ENCODE measurements at regions of chr1 and their contacts with region 1.

Region 1: DNA sequence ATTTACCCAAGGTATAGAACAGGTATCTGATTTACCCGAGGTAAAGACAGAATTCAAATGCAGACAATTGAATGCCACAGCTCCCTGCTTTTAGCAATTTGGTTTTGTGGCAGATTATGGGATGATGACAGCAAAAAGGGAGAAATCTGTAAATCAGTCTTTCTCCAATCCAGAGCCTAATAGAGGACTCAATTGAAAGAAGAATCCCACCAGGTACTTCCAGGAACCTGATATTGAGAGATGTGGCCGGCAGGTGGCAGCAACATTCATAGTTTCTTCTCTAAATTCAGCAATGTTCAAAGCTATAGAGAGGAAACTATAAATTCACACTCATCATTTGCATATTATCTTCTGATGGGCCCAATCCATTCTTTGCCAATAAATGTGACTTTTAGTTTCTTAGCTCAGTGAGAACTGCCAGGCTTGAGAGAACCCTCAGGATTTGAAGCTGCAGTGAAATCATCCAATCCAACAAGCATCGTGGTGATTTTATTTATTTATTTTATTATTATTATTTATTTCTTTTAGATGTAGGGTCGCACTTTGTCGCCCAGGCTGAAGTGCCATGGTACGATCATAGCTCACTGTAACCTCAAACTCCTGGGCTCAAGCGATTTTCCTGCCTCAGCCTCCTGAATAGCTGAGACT is 9.8 kb upstream of the PHACTR4 start:
- DNase-seq: no peak
- ATAC-seq: peak; percentile 89
- H3K4me3 ChIP-seq: no peak overlapping the region
- H3K27ac ChIP-seq: no peak overlapping the region
- H3K4me1 ChIP-seq: no peaks in the 10 kb centered on the region
- H3K27me3 ChIP-seq: no peaks in the 10 kb centered on the region
- CTCF ChIP-seq: peak; percentile 65 to 73 (median 66)
- EP300 ChIP-seq: no peak
- POLR2A ChIP-seq: no peak
- RAD21 ChIP-seq: peak; percentile 57

Region 2: DNA sequence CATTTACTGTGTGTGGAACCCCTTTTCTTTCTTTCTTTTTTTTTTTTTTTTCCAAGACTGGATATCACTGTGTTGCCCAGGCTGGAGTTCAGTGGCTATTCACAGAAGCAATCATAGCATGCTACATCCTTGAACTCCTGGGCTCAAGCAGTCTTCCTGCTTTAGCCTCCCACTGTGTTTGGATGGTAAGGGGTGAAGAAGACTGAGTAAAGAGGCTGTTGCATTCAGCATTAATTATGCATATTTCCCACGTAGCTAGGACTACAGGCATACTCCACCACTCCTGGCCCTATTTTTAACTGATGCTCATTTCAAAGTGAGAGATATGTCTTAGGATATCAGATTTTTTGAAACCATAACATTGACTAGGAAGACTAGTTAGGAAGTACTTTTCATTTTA is 49.4 kb after region 1 on chr1:
- CTCF ChIA-PET with region 1: interaction called, 13 read pairs
- POLR2A ChIA-PET with region 1: no interaction called
- RAD21 ChIA-PET with region 1: interaction called, 6 read pairs
- SMC1A ChIA-PET with region 1: interaction called, 5 read pairs
- in situ Hi-C with region 1: no loop called
- intact Hi-C with region 1: no loop called
- DNase-seq: no peak
- ATAC-seq: no peak
- H3K4me3 ChIP-seq: no peak overlapping the region
- H3K27ac ChIP-seq: no peak overlapping the region
- H3K4me1 ChIP-seq: no peaks in the 10 kb centered on the region
- H3K27me3 ChIP-seq: no peaks in the 10 kb centered on the region
- CTCF ChIP-seq: no peak
- EP300 ChIP-seq: no peak
- POLR2A ChIP-seq: no peak
- RAD21 ChIP-seq: no peak

Region 3: GRCh38 chr1:28428990-28429520 is 69.3 kb after region 1 on chr1:
- CTCF ChIA-PET with region 1: interaction called, 11 read pairs
- POLR2A ChIA-PET with region 1: no interaction called
- RAD21 ChIA-PET with region 1: no interaction called
- SMC1A ChIA-PET with region 1: interaction called, 4 read pairs
- in situ Hi-C with region 1: no loop called
- intact Hi-C with region 1: no loop called
- DNase-seq: no peak
- ATAC-seq: no peak
- H3K4me3 ChIP-seq: no peak overlapping the region
- H3K27ac ChIP-seq: no peak overlapping the region
- H3K4me1 ChIP-seq: peaks cover 8% of the 10 kb centered on the region
- H3K27me3 ChIP-seq: no peaks in the 10 kb centered on the region
- CTCF ChIP-seq: no peak
- EP300 ChIP-seq: no peak
- POLR2A ChIP-seq: no peak
- RAD21 ChIP-seq: no peak

Region 4: DNA sequence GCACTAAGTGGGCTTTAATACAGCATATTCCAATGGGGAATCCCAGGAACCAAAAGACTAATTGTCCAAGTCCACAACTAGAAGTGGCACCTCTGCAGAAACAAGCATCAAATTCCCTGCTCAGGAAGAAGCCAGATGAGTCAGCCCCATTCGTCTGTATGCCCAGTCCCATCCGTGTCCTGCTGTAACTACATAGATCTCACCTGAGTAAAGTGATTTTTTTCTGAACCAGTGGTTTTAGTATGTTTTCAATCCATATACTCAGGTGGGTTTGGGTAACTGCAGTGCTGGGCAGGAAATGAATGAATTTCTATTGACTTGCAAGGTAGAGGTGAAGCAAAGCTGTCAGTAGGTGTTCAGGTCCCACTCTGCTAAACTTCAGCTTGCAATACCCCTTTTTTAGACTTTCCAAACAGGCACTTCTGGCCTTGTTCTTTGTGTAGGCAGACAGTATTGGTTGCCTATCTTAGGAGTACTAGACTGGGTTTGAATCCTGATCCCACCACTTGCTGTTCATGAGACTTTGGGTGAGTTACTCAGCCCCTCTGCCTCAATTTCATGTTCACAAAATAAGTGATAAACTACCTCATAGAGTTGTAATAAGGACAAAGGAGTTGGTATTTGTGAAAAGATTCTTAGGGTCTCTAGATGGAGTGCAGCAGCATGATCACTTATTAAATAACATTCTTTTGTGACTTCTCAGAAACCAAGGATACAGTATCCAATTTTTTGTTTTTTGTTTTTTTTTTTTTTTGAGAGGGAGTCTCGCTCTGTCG is 151.1 kb after region 1 on chr1:
- CTCF ChIA-PET with region 1: interaction called, 18 read pairs
- POLR2A ChIA-PET with region 1: interaction called, 4 read pairs
- RAD21 ChIA-PET with region 1: interaction called, 8 read pairs
- SMC1A ChIA-PET with region 1: interaction called, 3 read pairs
- in situ Hi-C with region 1: no loop called
- intact Hi-C with region 1: no loop called
- DNase-seq: no peak
- ATAC-seq: peak; percentile 11
- H3K4me3 ChIP-seq: peak overlapping the region; percentile 84
- H3K27ac ChIP-seq: peak overlapping the region; percentile 94
- H3K4me1 ChIP-seq: peaks cover 10% of the 10 kb centered on the region
- H3K27me3 ChIP-seq: no peaks in the 10 kb centered on the region
- CTCF ChIP-seq: no peak
- EP300 ChIP-seq: no peak
- POLR2A ChIP-seq: peak; percentile 67
- RAD21 ChIP-seq: no peak

Region 5: GRCh38 chr1:28518000-28518744 is 158.5 kb after region 1 on chr1:
- CTCF ChIA-PET with region 1: interaction called, 18 read pairs
- POLR2A ChIA-PET with region 1: interaction called, 4 read pairs
- RAD21 ChIA-PET with region 1: interaction called, 4 read pairs
- SMC1A ChIA-PET with region 1: interaction called, 3 read pairs
- in situ Hi-C with region 1: no loop called
- intact Hi-C with region 1: no loop called
- DNase-seq: no peak
- ATAC-seq: peak; percentile 72
- H3K4me3 ChIP-seq: peak overlapping the region; percentile 80
- H3K27ac ChIP-seq: peak overlapping the region; percentile 84
- H3K4me1 ChIP-seq: peaks cover 18% of the 10 kb centered on the region
- H3K27me3 ChIP-seq: no peaks in the 10 kb centered on the region
- CTCF ChIP-seq: peak; percentile 94 to 99 (median 97); a peak in 5 of 6 replicates
- EP300 ChIP-seq: no peak
- POLR2A ChIP-seq: peak; percentile 89
- RAD21 ChIP-seq: peak; percentile 89

Region 6: GRCh38 chr1:28778021-28778420 is 418.3 kb after region 1 on chr1:
- CTCF ChIA-PET with region 1: no interaction called
- POLR2A ChIA-PET with region 1: no interaction called
- RAD21 ChIA-PET with region 1: no interaction called
- SMC1A ChIA-PET with region 1: no interaction called
- in situ Hi-C with region 1: no loop called
- intact Hi-C with region 1: no loop called
- DNase-seq: no peak
- ATAC-seq: no peak
- H3K4me3 ChIP-seq: no peak overlapping the region
- H3K27ac ChIP-seq: no peak overlapping the region
- H3K4me1 ChIP-seq: no peaks in the 10 kb centered on the region
- H3K27me3 ChIP-seq: no peaks in the 10 kb centered on the region
- CTCF ChIP-seq: no peak
- EP300 ChIP-seq: no peak
- POLR2A ChIP-seq: no peak
- RAD21 ChIP-seq: no peak